WTC11 (cell line): ENCODE measurements at regions of chr16 and their contacts with region 1.

Region 1: GRCh38 chr16:10579965-10580882 is at the start of gene EMP2:
- DNase-seq: peak; percentile 80
- ATAC-seq: peak; percentile 83
- H3K4me3 Mint-ChIP-seq: peak within 1 kb of the TSS; percentile 73
- H3K27ac Mint-ChIP-seq: no peak within 1 kb of the TSS; the same call in 1 of the 2 replicates
- H3K4me1 Mint-ChIP-seq: peaks cover 64% of the 10 kb centered on the region
- H3K27me3 Mint-ChIP-seq: peaks cover 10% of the 10 kb centered on the region
- CTCF ChIP-seq: peak; percentile 25; the same call in 1 of the 2 replicates
- total RNA-seq, gene EMP2: 15.2 to 16.7 TPM (median 16.4 TPM) in 3 replicates

Region 2: GRCh38 chr16:10138881-10139280 is 441.3 kb before region 1 on chr16:
- CTCF ChIA-PET with region 1: no interaction called
- POLR2A ChIA-PET with region 1: no interaction called
- DNase-seq: no peak
- ATAC-seq: no peak
- H3K4me3 Mint-ChIP-seq: no peak overlapping the region
- H3K27ac Mint-ChIP-seq: no peak overlapping the region
- H3K4me1 Mint-ChIP-seq: no peaks in the 10 kb centered on the region
- H3K27me3 Mint-ChIP-seq: no peaks in the 10 kb centered on the region
- CTCF ChIP-seq: no peak

Region 3: DNA sequence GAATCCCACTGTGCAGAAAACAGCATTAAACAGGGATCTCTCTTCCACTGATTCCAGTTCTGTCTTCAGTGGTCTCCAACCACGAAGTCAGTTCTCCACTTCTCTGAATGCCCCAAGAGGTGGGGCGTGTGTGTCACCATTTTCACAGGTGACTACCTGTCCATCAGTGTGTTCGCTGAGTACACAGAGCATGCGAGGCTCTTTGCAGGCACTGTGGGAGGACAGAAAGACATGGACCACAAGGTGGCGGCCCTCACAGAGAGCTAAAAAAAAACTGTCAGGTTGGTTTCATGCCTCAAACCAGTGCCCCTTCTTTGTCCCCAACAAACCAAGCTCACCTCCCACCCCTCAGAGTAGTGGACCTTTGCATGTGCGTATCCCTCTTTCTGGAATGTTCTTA is 13.6 kb before region 1 on chr16:
- CTCF ChIA-PET with region 1: interaction called, 32 read pairs
- POLR2A ChIA-PET with region 1: no interaction called
- DNase-seq: no peak
- ATAC-seq: peak; percentile 55
- H3K4me3 Mint-ChIP-seq: no peak overlapping the region
- H3K27ac Mint-ChIP-seq: no peak overlapping the region
- H3K4me1 Mint-ChIP-seq: peaks cover 4% of the 10 kb centered on the region; the same call in 1 of the 2 replicates
- H3K27me3 Mint-ChIP-seq: no peaks in the 10 kb centered on the region; the same call in 1 of the 2 replicates
- CTCF ChIP-seq: no peak